Activated CD4-positive, alpha-beta T cell treated with anti-CD3 and anti-CD28 coated beads, Interleukin-2, amount 10 ng/mL, durations not matched to agents 24 days and 14 days (primary cell): ENCODE measurements at regions of chr19 and their contacts with region 1.

Region 1: GRCh38 chr19:39445265-39446111 is at the start of gene SUPT5H:
- DNase-seq: peak; percentile 99
- H3K4me3 Mint-ChIP-seq: peak within 1 kb of the TSS; percentile 98
- H3K27ac Mint-ChIP-seq: peak within 1 kb of the TSS; percentile 96
- H3K4me1 Mint-ChIP-seq: peaks cover 34% of the 10 kb centered on the region
- H3K27me3 Mint-ChIP-seq: no peaks in the 10 kb centered on the region
- total RNA-seq, gene SUPT5H: 186 and 187 TPM in 2 replicates

Region 2: GRCh38 chr19:39390755-39391592 is 54.5 kb before region 1 on chr19 and contains the starts of genes MED29 and PAF1:
- intact Hi-C with region 1: loop called (anchors 1 kb)
- DNase-seq: peak; percentile 99
- H3K4me3 Mint-ChIP-seq: peak within 1 kb of the TSS; percentile 98
- H3K27ac Mint-ChIP-seq: peak within 1 kb of the TSS; percentile 97
- H3K4me1 Mint-ChIP-seq: peaks cover 28% of the 10 kb centered on the region
- H3K27me3 Mint-ChIP-seq: no peaks in the 10 kb centered on the region
- total RNA-seq, gene MED29: 36.0 and 38.7 TPM in 2 replicates
- total RNA-seq, gene PAF1: 47.1 and 50.6 TPM in 2 replicates

Region 3: GRCh38 chr19:39502640-39503417 is 57.3 kb after region 1 on chr19:
- intact Hi-C with region 1: loop called (anchors 1 kb)
- DNase-seq: peak; percentile 95
- H3K4me3 Mint-ChIP-seq: peak overlapping the region; percentile 42
- H3K27ac Mint-ChIP-seq: no peak overlapping the region
- H3K4me1 Mint-ChIP-seq: peaks cover 29% of the 10 kb centered on the region
- H3K27me3 Mint-ChIP-seq: peaks cover 63% of the 10 kb centered on the region

Region 4: DNA sequence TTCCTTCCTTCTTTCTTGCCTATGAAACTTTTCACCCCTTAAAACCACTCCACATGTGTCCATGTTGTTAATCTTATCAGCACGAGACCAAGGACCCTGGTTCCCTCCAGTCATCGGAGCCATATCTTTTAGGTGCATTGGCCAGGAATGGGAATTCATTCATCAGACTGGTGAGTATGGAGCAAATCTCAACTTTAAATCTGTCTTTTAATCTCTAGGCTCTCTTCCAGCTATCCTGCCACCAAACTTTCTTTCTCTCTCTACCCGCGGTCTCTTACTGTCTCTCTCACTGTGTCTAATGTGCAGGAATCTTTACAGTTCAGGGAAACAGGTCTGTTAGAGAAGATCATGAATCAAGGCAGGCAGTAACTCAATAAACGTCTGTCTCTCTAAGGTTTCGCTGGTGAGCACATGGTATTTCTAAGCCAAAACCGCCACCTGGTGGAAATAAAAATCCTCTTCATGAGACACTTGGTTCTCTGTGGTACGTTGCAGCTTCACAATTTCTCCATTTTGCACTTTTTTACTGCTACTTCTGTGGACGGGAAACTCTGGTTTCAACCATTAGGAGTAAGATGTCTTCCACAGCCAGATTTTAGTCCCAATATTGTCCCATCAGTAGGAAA is 226.4 kb after region 1 on chr19:
- intact Hi-C with region 1: loop called (anchors 1 kb)
- DNase-seq: peak; percentile 88
- H3K4me3 Mint-ChIP-seq: no peak overlapping the region
- H3K27ac Mint-ChIP-seq: no peak overlapping the region
- H3K4me1 Mint-ChIP-seq: peaks cover 25% of the 10 kb centered on the region
- H3K27me3 Mint-ChIP-seq: peaks cover 14% of the 10 kb centered on the region

Region 5: GRCh38 chr19:39833464-39834286 is 388.2 kb after region 1 on chr19 and contains the start of gene DYRK1B:
- intact Hi-C with region 1: loop called (anchors 5 kb)
- DNase-seq: peak; percentile 99
- H3K4me3 Mint-ChIP-seq: peak within 1 kb of the TSS; percentile 84
- H3K27ac Mint-ChIP-seq: peak within 1 kb of the TSS; percentile 91
- H3K4me1 Mint-ChIP-seq: peaks cover 32% of the 10 kb centered on the region
- H3K27me3 Mint-ChIP-seq: peaks cover 2% of the 10 kb centered on the region
- total RNA-seq, gene DYRK1B: 3.6 and 4.5 TPM in 2 replicates